H1 (cell line): ENCODE measurements at regions of chr4 and their contacts with region 1.

Region 1: DNA sequence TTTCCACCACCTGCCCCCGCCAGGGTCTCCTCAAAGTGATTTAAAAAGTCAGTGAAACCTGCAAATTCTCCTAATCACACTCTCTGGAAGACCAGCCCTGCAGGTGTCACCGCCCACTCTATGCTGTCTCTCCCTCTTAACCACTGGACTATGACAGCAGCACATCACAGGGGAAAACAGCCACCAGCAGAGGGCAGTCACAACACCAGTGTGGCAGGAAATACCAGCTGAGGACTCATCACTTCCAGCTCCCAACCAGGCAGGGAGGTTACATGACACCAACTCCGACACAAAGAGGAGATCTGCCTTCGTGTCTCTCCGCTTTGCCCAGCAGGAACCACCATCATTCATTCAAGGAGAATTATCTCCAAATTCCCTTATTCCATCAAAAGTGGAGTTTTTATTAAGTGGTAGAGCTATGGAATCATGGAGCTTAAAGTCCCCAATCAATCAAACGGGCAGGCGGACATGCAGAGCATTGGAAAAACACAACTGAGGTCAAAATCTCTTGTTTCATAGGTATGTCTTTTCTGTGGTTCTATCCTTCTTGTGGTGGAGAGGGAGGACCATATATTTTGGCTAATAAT is 91.3 kb downstream of the NSUN7 start:
- DNase-seq: peak; percentile 89 to 97
- H3K4me3 ChIP-seq: no peak overlapping the region
- H3K27ac ChIP-seq: no peak overlapping the region
- H3K4me1 ChIP-seq: peaks cover 0 to 6% (median 0%) of the 10 kb centered on the region in 4 experiments; a peak in 1 of 7 replicates
- H3K27me3 ChIP-seq: no peaks in the 10 kb centered on the region
- CTCF ChIP-seq: peak; percentile 88 to 99 (median 98)
- EP300 ChIP-seq: peak in 1 of 2 experiments; percentile 28; a peak in 1 of 3 replicates
- POLR2A ChIP-seq: no peak
- RAD21 ChIP-seq: peak; percentile 70 to 77

Region 2: GRCh38 chr4:40736910-40737309 is 104.2 kb before region 1 on chr4:
- CTCF ChIA-PET with region 1: interaction called, 13 read pairs
- POLR2A ChIA-PET with region 1: no interaction called
- DNase-seq: no peak
- H3K4me3 ChIP-seq: no peak overlapping the region
- H3K27ac ChIP-seq: no peak overlapping the region
- H3K4me1 ChIP-seq: peaks cover 0 to 2% (median 0%) of the 10 kb centered on the region in 4 experiments; a peak in 1 of 7 replicates
- H3K27me3 ChIP-seq: no peaks in the 10 kb centered on the region
- CTCF ChIP-seq: peak in 2 of 3 experiments; percentile 32 to 33; a peak in 2 of 4 replicates
- EP300 ChIP-seq: no peak
- POLR2A ChIP-seq: no peak
- RAD21 ChIP-seq: peak; percentile 67 to 72

Region 3: DNA sequence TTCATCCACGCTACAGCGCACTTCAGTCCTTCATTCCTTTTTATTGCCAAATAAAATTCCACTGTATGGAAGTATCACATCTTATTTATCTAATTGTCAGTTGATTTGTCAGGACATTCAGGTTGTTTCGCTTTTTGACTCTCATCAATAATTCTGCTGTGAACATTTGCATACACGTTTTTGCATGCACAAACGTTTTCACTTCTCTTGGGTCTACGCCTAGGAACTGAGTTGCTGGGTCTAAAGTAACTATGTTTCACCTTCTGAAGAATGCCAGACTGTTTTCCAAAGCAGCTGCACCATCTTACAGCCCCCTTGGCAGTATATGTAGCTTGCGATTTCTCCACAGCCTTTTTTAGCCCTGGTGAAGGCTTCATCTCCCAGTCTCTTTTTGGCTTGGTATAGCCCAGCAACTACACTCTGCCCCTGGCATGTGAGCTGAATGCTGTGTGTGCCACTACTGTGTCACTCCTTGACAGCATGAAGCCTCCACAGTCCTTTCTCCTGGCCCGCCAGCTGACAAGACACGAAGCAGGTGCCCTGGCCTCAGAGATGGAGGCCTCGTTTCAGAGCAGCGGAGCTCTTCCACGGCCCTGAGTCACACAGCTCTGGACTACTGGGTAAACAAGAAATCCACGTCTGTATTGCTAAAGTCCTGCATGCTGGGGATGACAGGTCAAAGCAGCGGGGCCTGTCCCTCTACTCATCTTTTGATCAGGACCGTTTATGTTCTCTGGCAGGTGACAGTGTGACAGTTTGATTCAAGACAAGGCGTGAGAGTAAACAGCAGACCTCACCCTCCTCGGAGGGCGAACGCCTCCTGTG is 15.9 kb before region 1 on chr4:
- CTCF ChIA-PET with region 1: interaction called, 41 read pairs
- POLR2A ChIA-PET with region 1: interaction called, 3 read pairs
- DNase-seq: no peak
- H3K4me3 ChIP-seq: no peak overlapping the region
- H3K27ac ChIP-seq: no peak overlapping the region
- H3K4me1 ChIP-seq: no peaks in the 10 kb centered on the region
- H3K27me3 ChIP-seq: no peaks in the 10 kb centered on the region
- CTCF ChIP-seq: no peak
- EP300 ChIP-seq: no peak
- POLR2A ChIP-seq: no peak
- RAD21 ChIP-seq: no peak

Region 4: GRCh38 chr4:40856822-40857362 is 15.8 kb after region 1 on chr4:
- CTCF ChIA-PET with region 1: interaction called, 71 read pairs
- POLR2A ChIA-PET with region 1: interaction called, 37 read pairs
- DNase-seq: peak; percentile 63 to 90
- H3K4me3 ChIP-seq: peak overlapping the region; percentile 84 to 98 (median 90)
- H3K27ac ChIP-seq: peak overlapping the region; percentile 86
- H3K4me1 ChIP-seq: peaks cover 0 to 3% (median 1%) of the 10 kb centered on the region in 4 experiments; a peak in 2 of 7 replicates
- H3K27me3 ChIP-seq: no peaks in the 10 kb centered on the region
- CTCF ChIP-seq: no peak
- EP300 ChIP-seq: no peak
- POLR2A ChIP-seq: peak; percentile 94 to 98
- RAD21 ChIP-seq: no peak

Region 5: GRCh38 chr4:40865696-40866095 is 24.6 kb after region 1 on chr4:
- CTCF ChIA-PET with region 1: interaction called, 22 read pairs
- POLR2A ChIA-PET with region 1: no interaction called
- DNase-seq: no peak
- H3K4me3 ChIP-seq: no peak overlapping the region
- H3K27ac ChIP-seq: no peak overlapping the region
- H3K4me1 ChIP-seq: no peaks in the 10 kb centered on the region
- H3K27me3 ChIP-seq: no peaks in the 10 kb centered on the region
- CTCF ChIP-seq: no peak
- EP300 ChIP-seq: no peak
- POLR2A ChIP-seq: no peak
- RAD21 ChIP-seq: no peak

Region 6: DNA sequence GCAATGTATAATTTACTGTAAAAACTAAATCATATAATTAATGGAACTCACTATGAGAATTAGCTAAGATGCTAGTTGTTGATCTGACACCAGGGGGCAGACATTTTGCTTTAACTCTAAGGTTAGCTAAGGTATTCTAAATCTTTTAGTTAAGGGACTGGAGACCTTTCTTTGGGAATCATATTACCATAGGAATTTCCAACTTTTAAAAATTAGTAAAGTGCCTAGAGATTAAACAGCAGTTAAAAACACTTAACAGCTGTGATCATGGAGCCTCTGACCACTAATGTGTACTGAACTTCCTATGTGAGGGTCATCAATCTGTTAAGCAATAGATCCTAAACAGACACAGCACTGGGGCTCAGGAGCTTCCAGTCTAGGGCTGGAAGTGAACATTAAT is 135.3 kb after region 1 on chr4:
- CTCF ChIA-PET with region 1: no interaction called
- POLR2A ChIA-PET with region 1: no interaction called
- DNase-seq: no peak
- H3K4me3 ChIP-seq: no peak overlapping the region
- H3K27ac ChIP-seq: no peak overlapping the region
- H3K4me1 ChIP-seq: no peaks in the 10 kb centered on the region
- H3K27me3 ChIP-seq: no peaks in the 10 kb centered on the region
- CTCF ChIP-seq: peak in 2 of 3 experiments; percentile 16 to 59; a peak in 2 of 4 replicates
- EP300 ChIP-seq: no peak
- POLR2A ChIP-seq: no peak
- RAD21 ChIP-seq: peak; percentile 43 to 59